Activated CD8-positive, alpha-beta T cell treated with anti-CD3 and anti-CD28 coated beads, Interleukin-2, amount 10 ng/mL, durations not matched to agents 7 days and 5 days (primary cell): ENCODE measurements at regions of chr9 and their contacts with region 1.

Region 1: GRCh38 chr9:124126571-124127289 is 115.2 kb downstream of the LHX2 start:
- DNase-seq: peak; percentile 86
- ATAC-seq: peak; percentile 84
- H3K4me3 Mint-ChIP-seq: no peak overlapping the region
- H3K27ac Mint-ChIP-seq: no peak overlapping the region
- H3K4me1 Mint-ChIP-seq: peaks cover 6% of the 10 kb centered on the region
- H3K27me3 Mint-ChIP-seq: peaks cover 17% of the 10 kb centered on the region

Region 2: DNA sequence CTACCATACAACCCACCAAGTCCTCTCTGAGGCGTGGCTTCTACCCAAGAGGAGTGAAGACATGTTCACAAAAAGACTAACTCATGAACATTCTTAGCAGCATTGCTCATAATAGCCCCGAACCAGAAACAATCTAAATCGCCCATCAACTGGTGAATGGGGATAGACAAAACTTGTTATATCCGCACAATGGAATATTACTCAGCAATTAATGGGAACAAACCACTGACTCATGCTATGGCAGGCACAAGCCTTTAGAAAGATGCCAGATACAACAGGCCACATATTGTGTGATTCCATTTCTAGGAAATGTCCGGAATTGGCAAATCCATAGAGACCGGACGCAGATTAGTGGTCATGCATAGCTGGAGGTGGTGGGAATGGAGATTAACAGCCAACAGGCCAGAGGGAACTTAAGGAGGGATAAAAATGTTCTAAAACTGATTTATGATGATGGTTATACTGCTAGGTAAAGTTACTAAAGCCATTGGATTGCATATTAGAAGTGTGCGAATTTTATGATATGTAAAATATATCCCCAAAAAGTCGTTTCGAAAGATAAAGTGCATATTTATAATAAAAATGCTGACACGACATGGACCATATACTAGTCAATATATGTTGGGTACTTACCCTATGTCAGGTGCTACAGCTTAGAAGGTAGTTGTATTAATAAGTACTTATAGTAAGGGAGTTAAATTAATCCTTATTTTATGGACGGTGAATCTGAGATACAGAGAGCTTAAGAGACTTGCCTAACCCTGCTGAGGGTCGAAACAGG is 59.8 kb before region 1 on chr9:
- CTCF ChIA-PET with region 1: no interaction called
- POLR2A ChIA-PET with region 1: no interaction called
- DNase-seq: no peak
- ATAC-seq: no peak
- H3K4me3 Mint-ChIP-seq: no peak overlapping the region
- H3K27ac Mint-ChIP-seq: no peak overlapping the region
- H3K4me1 Mint-ChIP-seq: no peaks in the 10 kb centered on the region
- H3K27me3 Mint-ChIP-seq: peaks cover 2% of the 10 kb centered on the region

Region 3: GRCh38 chr9:124110307-124110915 is 16.3 kb before region 1 on chr9:
- CTCF ChIA-PET with region 1: interaction called, 10 read pairs
- POLR2A ChIA-PET with region 1: no interaction called
- DNase-seq: peak; percentile 73
- ATAC-seq: peak; percentile 71
- H3K4me3 Mint-ChIP-seq: no peak overlapping the region
- H3K27ac Mint-ChIP-seq: no peak overlapping the region
- H3K4me1 Mint-ChIP-seq: no peaks in the 10 kb centered on the region
- H3K27me3 Mint-ChIP-seq: peaks cover 2% of the 10 kb centered on the region

Region 4: DNA sequence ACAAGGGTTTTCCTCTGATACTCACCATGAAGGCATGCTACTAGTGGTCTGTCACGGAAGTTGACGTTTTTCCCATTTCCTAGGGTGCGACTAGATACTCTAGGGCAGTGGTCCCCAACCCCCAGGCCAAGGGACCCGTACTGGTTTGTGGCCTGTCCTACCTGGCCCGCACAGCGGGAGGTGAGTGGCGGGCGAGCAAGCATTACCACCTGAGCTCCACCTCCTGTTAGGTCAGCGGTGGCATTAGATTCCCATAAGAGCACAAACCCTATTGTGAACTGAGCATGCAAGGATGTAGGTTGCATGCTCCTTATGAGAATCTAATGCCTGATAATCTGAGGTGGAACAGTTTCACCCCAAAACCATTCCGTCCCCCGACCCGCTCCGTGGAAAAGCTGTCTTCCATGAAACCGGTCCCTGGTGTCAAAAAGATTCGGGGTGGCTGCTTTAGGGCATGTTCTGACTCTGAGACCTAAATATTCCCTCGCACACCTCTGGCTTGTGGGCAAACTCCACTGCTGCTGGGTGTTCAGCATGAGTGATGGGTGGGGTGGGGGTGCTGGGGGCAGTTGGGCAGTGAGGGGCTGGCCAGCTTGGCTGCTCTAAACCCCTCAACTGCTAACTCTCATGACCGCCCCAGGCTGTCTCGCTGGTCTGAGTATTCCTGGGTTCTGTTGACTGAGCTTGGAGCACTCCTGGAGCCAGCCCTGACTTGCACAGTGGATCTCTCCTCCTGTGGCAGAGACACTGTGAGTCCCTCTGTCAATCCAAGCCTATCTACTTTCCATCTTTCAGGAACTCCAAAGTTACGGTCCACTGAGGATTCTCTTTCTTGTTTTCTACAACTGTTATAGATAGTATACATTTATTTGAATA is 52.7 kb after region 1 on chr9:
- CTCF ChIA-PET with region 1: no interaction called
- POLR2A ChIA-PET with region 1: no interaction called
- DNase-seq: no peak
- ATAC-seq: no peak
- H3K4me3 Mint-ChIP-seq: no peak overlapping the region
- H3K27ac Mint-ChIP-seq: no peak overlapping the region
- H3K4me1 Mint-ChIP-seq: peaks cover 1% of the 10 kb centered on the region
- H3K27me3 Mint-ChIP-seq: peaks cover 26% of the 10 kb centered on the region

Region 5: GRCh38 chr9:124291801-124292396 is 165.2 kb after region 1 on chr9:
- CTCF ChIA-PET with region 1: interaction called, 95 read pairs
- POLR2A ChIA-PET with region 1: no interaction called
- DNase-seq: peak; percentile 67
- ATAC-seq: peak; percentile 76
- H3K4me3 Mint-ChIP-seq: peak overlapping the region; percentile 51
- H3K27ac Mint-ChIP-seq: peak overlapping the region; percentile 75
- H3K4me1 Mint-ChIP-seq: peaks cover 79% of the 10 kb centered on the region
- H3K27me3 Mint-ChIP-seq: peaks cover 3% of the 10 kb centered on the region

Region 6: GRCh38 chr9:124306098-124306735 is 179.5 kb after region 1 on chr9:
- CTCF ChIA-PET with region 1: interaction called, 22 read pairs
- POLR2A ChIA-PET with region 1: no interaction called
- DNase-seq: no peak
- ATAC-seq: no peak
- H3K4me3 Mint-ChIP-seq: no peak overlapping the region
- H3K27ac Mint-ChIP-seq: no peak overlapping the region
- H3K4me1 Mint-ChIP-seq: peaks cover 2% of the 10 kb centered on the region
- H3K27me3 Mint-ChIP-seq: no peaks in the 10 kb centered on the region

Region 7: DNA sequence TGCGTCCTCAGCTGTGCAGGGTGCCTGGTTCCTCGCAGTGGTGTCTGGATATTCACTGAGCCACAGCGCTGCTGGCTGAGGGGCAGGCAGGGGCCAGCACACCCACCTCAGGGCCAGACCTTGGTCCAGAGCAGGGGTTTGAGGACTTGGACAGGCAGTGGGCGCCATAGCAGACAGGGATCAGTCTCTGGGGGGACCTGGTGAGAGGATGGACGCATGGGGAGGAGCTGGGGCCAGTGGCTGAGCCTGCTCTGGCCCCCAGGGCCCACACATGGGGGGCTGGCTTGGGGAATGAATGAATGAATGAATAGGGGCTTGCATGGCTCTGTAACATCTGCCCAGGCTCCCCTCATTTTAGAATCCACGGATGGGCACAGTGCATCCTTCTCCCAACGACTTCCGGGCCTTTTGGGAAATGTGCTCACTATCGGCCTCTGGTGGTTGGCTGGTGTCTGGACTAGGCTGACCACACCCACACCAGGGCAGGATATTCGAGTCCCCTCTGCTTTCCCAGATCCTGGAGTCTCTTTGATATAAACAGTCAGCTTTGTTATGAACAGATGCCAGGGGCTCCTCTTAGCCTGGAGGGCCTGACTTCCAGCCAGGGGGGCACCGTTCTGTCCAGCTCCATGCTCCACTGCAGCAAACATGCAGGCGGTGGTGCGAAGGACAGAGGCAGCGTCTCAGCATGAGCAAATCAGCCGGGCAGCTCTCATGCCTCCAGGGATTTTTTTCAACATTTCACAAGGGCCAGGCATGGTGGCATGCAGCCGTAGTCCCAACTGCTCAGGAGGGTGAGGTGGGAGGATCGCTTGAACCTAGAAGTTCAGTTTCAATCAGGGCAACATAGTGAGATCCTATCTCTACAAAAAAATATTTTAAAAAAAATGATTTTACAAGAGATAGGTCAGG is 193.6 kb after region 1 on chr9:
- CTCF ChIA-PET with region 1: interaction called, 16 read pairs
- POLR2A ChIA-PET with region 1: no interaction called
- DNase-seq: peak; percentile 58
- ATAC-seq: peak; percentile 64
- H3K4me3 Mint-ChIP-seq: no peak overlapping the region
- H3K27ac Mint-ChIP-seq: no peak overlapping the region
- H3K4me1 Mint-ChIP-seq: no peaks in the 10 kb centered on the region
- H3K27me3 Mint-ChIP-seq: no peaks in the 10 kb centered on the region

Region 8: DNA sequence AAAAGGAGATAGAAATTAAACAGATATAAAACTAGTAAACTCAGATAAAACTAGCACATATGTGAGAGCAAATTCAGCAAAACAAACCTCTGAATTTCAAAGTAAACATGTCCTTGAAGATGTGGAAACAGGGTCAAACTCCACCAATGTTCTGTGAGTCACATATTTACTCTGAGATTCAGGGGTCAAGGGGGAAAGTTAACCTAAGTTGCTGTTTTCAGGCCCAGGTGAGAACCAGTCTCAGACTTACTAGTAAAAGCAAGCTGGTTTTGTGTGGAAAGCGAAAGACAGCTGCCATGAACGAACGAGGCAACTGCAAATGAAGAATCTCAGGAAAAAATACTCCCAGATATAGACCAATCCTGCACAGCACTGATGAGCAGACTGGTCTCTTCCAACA is 259.5 kb after region 1 on chr9:
- CTCF ChIA-PET with region 1: interaction called, 23 read pairs
- POLR2A ChIA-PET with region 1: no interaction called
- DNase-seq: no peak
- ATAC-seq: no peak
- H3K4me3 Mint-ChIP-seq: no peak overlapping the region
- H3K27ac Mint-ChIP-seq: no peak overlapping the region
- H3K4me1 Mint-ChIP-seq: peaks cover 7% of the 10 kb centered on the region
- H3K27me3 Mint-ChIP-seq: no peaks in the 10 kb centered on the region

Region 9: DNA sequence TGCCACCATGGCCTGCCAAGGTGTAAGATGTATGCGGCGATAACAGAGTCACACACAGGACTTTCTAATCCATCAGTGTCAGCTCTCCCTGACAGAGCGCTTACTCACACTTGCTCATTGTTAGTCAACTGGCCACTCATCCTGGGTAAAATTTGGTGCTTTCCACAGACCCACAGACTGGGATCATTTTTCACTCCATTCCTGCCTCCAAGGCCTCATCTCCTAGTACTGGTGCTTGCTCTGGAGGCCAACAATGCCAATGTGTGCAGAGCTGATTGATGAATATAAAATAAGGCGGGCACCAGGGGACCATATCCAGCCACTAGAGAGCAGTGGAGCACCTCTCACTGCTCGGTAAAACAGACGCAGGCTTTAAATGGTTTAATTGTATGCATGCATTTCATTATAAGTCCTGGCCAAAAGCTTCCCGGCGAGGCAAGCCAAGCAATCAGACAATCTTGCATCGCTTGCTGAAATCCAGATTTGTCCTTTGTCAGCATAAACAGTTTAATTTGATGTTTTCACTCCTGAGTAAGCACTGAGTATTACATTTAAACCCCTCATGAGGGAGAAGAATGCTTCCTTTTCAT is 266.2 kb after region 1 on chr9:
- CTCF ChIA-PET with region 1: interaction called, 21 read pairs
- POLR2A ChIA-PET with region 1: interaction called, 3 read pairs
- DNase-seq: no peak
- ATAC-seq: no peak
- H3K4me3 Mint-ChIP-seq: no peak overlapping the region
- H3K27ac Mint-ChIP-seq: no peak overlapping the region
- H3K4me1 Mint-ChIP-seq: peaks cover 31% of the 10 kb centered on the region
- H3K27me3 Mint-ChIP-seq: no peaks in the 10 kb centered on the region